WTC11 (cell line): ENCODE measurements at regions of chr13 and their contacts with region 1.

Region 1: DNA sequence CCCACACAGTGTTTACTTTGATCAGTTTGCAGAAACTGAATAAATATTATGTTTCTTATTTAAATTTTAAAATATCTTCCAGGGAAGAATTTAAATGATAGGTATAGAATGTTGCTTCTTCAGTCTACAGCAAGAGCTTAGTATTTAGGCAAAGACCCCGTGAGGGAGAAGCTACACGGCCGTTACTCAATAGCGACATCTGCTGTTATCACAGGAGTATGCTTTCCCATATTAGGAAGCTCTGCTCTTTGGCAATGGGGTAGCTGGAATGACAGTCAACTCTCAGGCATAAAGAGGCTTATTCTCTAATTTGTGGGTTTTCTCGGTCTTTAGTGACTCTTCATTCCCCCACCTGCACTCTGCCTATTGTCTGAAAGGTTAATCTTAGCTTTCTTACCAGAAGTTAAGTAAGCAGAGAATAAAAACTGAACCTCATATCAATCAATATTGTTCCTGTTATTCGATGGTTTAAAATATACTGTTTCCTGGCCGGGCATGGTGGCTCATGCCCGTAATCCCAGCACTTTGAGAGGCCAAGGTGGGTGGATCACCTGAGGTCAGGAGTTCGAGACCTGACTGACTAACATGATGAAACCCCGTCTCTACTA is 13.2 kb upstream of the LHFPL6 start:
- DNase-seq: peak; percentile 54
- ATAC-seq: peak; percentile 94
- H3K4me3 Mint-ChIP-seq: no peak overlapping the region
- H3K27ac Mint-ChIP-seq: no peak overlapping the region
- H3K4me1 Mint-ChIP-seq: peaks cover 8% of the 10 kb centered on the region; the same call in 1 of the 2 replicates
- H3K27me3 Mint-ChIP-seq: no peaks in the 10 kb centered on the region
- CTCF ChIP-seq: peak; percentile 65

Region 2: DNA sequence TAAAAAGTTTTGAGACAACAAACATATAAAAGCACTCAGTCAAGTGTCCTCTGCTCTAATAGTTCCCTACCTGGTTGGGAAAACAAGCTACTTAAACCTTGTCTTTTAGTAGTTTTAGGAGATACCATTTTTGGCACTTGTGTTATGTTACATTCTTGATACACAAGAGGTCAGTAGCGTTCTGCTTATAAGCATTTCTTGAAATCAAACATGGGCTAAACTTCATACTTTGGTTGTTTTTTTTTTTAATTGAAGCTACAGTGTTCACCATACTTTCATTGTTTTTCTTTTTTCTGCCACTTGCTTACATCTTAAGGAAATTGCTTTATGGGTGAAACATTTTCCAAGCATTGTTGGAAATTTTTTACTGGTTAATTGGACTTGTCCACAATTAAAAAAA is 565.0 kb before region 1 on chr13:
- CTCF ChIA-PET with region 1: interaction called, 16 read pairs
- POLR2A ChIA-PET with region 1: no interaction called
- DNase-seq: no peak
- ATAC-seq: peak; percentile 46
- H3K4me3 Mint-ChIP-seq: no peak overlapping the region
- H3K27ac Mint-ChIP-seq: no peak overlapping the region
- H3K4me1 Mint-ChIP-seq: peaks cover 42% of the 10 kb centered on the region
- H3K27me3 Mint-ChIP-seq: no peaks in the 10 kb centered on the region
- CTCF ChIP-seq: no peak

Region 3: DNA sequence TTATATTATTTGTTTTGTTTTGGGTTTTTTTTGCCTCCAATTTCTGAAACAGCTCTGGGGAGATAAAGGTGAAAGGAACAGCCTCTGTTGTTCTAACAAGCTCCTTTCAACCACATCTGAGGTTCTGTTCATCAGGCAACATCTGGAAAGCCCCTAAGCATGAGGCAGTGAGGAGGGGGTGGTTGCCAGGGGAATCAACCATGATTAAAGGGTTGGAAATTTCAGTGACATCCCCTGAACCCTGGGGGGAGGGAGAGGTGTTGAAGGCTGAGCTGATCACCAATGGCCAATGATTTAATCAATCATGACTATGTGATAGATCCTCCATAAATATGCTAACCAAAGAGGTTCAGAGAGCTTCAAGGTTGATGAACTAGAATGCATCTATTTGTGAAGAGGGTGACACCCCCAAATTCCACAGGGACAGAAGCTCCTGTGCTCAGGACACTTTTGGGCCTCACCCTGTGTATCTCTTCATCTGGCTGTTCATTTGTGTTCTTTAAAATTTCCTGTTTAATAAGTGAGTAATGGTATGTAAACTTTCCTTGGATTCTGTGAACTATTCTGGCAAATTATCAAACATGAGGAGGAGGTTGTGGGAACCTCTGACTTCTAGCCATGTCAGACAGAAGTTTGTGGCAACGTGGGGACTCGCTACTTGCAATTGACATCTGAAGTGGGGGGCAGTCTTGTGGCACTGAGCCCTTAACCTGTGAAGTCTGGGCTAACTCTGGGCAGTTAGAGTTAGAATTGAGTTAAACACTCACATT is 356.6 kb before region 1 on chr13:
- CTCF ChIA-PET with region 1: interaction called, 21 read pairs
- POLR2A ChIA-PET with region 1: no interaction called
- DNase-seq: no peak
- ATAC-seq: no peak
- H3K4me3 Mint-ChIP-seq: no peak overlapping the region
- H3K27ac Mint-ChIP-seq: no peak overlapping the region
- H3K4me1 Mint-ChIP-seq: peaks cover 5% of the 10 kb centered on the region; the same call in 1 of the 2 replicates
- H3K27me3 Mint-ChIP-seq: no peaks in the 10 kb centered on the region; the same call in 1 of the 2 replicates
- CTCF ChIP-seq: no peak

Region 4: GRCh38 chr13:39284801-39285388 is 331.3 kb before region 1 on chr13:
- CTCF ChIA-PET with region 1: interaction called, 15 read pairs
- POLR2A ChIA-PET with region 1: no interaction called
- DNase-seq: no peak
- ATAC-seq: peak; percentile 76; the same call in 1 of the 2 replicates
- H3K4me3 Mint-ChIP-seq: no peak overlapping the region
- H3K27ac Mint-ChIP-seq: no peak overlapping the region
- H3K4me1 Mint-ChIP-seq: no peaks in the 10 kb centered on the region; the same call in 1 of the 2 replicates
- H3K27me3 Mint-ChIP-seq: peaks cover 19% of the 10 kb centered on the region
- CTCF ChIP-seq: no peak

Region 5: DNA sequence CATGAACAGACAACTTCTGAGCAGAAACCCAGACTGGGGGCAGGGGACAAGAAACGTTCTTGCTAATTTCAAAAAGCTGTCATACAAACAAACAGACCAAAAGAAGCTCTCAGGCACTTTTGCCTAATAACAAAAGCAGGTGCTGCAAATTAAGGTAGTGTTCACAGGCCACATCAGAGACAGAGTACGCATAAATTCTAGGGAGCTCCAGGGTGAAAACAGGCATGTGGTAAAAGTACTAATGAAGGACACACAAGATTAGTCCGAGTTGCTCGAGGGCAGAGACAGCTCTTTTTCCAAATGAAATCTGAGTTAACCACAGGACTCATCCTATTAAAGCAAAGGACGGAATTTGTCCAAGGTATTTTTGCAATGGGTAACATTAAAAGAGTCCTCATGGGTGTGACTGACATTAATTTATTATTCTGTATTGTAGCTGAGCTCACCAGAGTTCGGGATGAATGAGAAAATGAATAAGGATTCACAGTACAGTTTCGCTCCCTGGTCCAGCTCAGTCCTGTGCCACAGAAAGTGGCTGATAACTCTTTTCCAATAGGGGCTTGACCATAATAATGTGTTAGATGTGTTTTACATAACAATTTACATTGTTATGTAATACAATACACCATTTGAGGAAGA is 210.5 kb before region 1 on chr13:
- CTCF ChIA-PET with region 1: interaction called, 17 read pairs
- POLR2A ChIA-PET with region 1: no interaction called
- DNase-seq: no peak
- ATAC-seq: no peak
- H3K4me3 Mint-ChIP-seq: no peak overlapping the region
- H3K27ac Mint-ChIP-seq: no peak overlapping the region
- H3K4me1 Mint-ChIP-seq: peaks cover 47% of the 10 kb centered on the region
- H3K27me3 Mint-ChIP-seq: peaks cover 6% of the 10 kb centered on the region
- CTCF ChIP-seq: no peak

Region 6: GRCh38 chr13:39452417-39452816 is 163.8 kb before region 1 on chr13:
- CTCF ChIA-PET with region 1: no interaction called
- POLR2A ChIA-PET with region 1: no interaction called
- DNase-seq: no peak
- ATAC-seq: no peak
- H3K4me3 Mint-ChIP-seq: no peak overlapping the region
- H3K27ac Mint-ChIP-seq: no peak overlapping the region
- H3K4me1 Mint-ChIP-seq: peaks cover 10% of the 10 kb centered on the region
- H3K27me3 Mint-ChIP-seq: no peaks in the 10 kb centered on the region
- CTCF ChIP-seq: no peak

Region 7: GRCh38 chr13:39602614-39603366 is 13.4 kb before region 1 on chr13 and contains the start of gene LHFPL6:
- CTCF ChIA-PET with region 1: interaction called, 32 read pairs
- POLR2A ChIA-PET with region 1: no interaction called
- DNase-seq: peak; percentile 79
- ATAC-seq: peak; percentile 84
- H3K4me3 Mint-ChIP-seq: peak within 1 kb of the TSS; percentile 88
- H3K27ac Mint-ChIP-seq: no peak within 1 kb of the TSS
- H3K4me1 Mint-ChIP-seq: peaks cover 15% of the 10 kb centered on the region
- H3K27me3 Mint-ChIP-seq: peaks cover 75% of the 10 kb centered on the region
- CTCF ChIP-seq: no peak
- total RNA-seq, gene LHFPL6: 1.4 to 4.5 TPM (median 2.1 TPM) in 3 replicates